K562 (cell line): ENCODE measurements at regions of chr12 and their contacts with region 1.

Region 1: DNA sequence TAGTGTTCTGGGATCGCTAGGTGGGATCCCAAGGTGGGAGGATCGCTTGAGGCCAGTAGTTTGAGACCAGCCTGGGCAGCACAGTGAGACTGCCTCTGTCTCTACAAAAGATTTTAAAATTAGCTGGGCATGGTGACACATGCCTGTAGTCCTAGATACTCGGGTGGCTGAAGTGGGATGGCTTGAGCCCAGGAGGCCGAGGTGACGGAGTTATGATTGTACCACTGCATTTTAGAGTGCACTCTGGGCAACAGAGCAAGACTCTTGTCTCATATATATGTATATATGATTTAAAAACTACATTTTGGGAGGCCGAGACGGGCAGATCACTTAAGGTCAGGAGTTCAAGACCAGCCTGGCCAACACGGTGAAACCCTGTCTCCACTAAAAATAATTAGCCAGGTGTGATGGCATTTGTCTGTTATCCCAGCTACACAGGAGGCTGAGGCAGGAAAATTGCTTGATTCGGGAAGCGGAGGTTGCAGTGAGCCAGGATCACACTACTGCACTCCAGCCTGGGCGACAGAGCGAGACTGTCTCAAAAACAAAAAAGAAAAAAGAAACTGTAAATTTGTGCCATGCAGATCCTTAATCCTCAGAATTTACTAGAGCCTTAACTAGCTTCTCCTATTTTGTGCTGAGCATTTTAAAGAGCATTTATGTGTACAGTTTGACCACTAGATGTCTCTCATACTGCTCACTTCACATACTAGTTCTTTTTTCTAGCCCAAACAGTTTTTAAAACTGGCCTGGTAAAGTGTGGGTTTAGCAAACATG is 114.8 kb downstream of the MON2 start:
- DNase-seq: peak; percentile 15 to 51 (median 27)
- ATAC-seq: peak; percentile 95
- H3K4me3 ChIP-seq: no peak overlapping the region
- H3K27ac ChIP-seq: no peak overlapping the region
- H3K4me1 ChIP-seq: no peaks in the 10 kb centered on the region
- H3K27me3 ChIP-seq: no peaks in the 10 kb centered on the region
- CTCF ChIP-seq: peak; percentile 49 to 72 (median 51); a peak in 5 of 6 replicates
- EP300 ChIP-seq: no peak
- POLR2A ChIP-seq: no peak
- RAD21 ChIP-seq: peak; percentile 81 to 84

Region 2: DNA sequence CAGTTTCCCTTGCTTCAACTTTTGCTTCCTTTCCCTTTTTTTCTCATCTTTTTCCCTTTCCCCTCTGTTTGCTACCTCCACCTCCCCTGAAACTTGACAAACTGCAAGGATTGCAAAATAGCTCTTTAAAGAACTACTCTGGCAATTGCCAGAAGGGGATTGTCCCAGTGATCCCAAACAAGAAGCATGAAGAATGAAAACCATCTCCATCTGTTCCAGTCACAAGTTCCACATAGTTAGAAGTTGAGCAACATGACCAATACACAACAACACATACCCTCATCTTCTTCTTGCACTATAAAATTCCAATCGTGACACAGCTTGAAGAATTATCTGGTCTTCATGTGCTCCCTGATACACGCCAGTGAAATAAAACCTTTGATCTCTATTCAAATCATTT is 415.0 kb before region 1 on chr12:
- CTCF ChIA-PET with region 1: no interaction called
- POLR2A ChIA-PET with region 1: no interaction called
- in situ Hi-C with region 1: no loop called
- intact Hi-C with region 1: no loop called
- DNase-seq: no peak
- ATAC-seq: no peak
- H3K4me3 ChIP-seq: no peak overlapping the region
- H3K27ac ChIP-seq: no peak overlapping the region
- H3K4me1 ChIP-seq: no peaks in the 10 kb centered on the region
- H3K27me3 ChIP-seq: no peaks in the 10 kb centered on the region
- CTCF ChIP-seq: no peak
- EP300 ChIP-seq: no peak
- POLR2A ChIP-seq: no peak
- RAD21 ChIP-seq: no peak

Region 3: GRCh38 chr12:62351326-62351725 is 230.2 kb before region 1 on chr12:
- CTCF ChIA-PET with region 1: no interaction called
- POLR2A ChIA-PET with region 1: no interaction called
- in situ Hi-C with region 1: no loop called
- intact Hi-C with region 1: no loop called
- DNase-seq: no peak
- ATAC-seq: peak; percentile 13; the same call in 1 of the 3 replicates
- H3K4me3 ChIP-seq: no peak overlapping the region
- H3K27ac ChIP-seq: peak overlapping the region; percentile 12; the same call in 1 of the 3 replicates
- H3K4me1 ChIP-seq: no peaks in the 10 kb centered on the region
- H3K27me3 ChIP-seq: no peaks in the 10 kb centered on the region
- CTCF ChIP-seq: no peak
- EP300 ChIP-seq: no peak
- POLR2A ChIP-seq: no peak
- RAD21 ChIP-seq: no peak

Region 4: GRCh38 chr12:62530596-62530995 is 50.9 kb before region 1 on chr12:
- CTCF ChIA-PET with region 1: no interaction called
- POLR2A ChIA-PET with region 1: no interaction called
- in situ Hi-C with region 1: no loop called
- intact Hi-C with region 1: no loop called
- DNase-seq: no peak
- ATAC-seq: no peak
- H3K4me3 ChIP-seq: no peak overlapping the region
- H3K27ac ChIP-seq: no peak overlapping the region
- H3K4me1 ChIP-seq: no peaks in the 10 kb centered on the region
- H3K27me3 ChIP-seq: no peaks in the 10 kb centered on the region
- CTCF ChIP-seq: no peak
- EP300 ChIP-seq: no peak
- POLR2A ChIP-seq: no peak
- RAD21 ChIP-seq: no peak

Region 5: DNA sequence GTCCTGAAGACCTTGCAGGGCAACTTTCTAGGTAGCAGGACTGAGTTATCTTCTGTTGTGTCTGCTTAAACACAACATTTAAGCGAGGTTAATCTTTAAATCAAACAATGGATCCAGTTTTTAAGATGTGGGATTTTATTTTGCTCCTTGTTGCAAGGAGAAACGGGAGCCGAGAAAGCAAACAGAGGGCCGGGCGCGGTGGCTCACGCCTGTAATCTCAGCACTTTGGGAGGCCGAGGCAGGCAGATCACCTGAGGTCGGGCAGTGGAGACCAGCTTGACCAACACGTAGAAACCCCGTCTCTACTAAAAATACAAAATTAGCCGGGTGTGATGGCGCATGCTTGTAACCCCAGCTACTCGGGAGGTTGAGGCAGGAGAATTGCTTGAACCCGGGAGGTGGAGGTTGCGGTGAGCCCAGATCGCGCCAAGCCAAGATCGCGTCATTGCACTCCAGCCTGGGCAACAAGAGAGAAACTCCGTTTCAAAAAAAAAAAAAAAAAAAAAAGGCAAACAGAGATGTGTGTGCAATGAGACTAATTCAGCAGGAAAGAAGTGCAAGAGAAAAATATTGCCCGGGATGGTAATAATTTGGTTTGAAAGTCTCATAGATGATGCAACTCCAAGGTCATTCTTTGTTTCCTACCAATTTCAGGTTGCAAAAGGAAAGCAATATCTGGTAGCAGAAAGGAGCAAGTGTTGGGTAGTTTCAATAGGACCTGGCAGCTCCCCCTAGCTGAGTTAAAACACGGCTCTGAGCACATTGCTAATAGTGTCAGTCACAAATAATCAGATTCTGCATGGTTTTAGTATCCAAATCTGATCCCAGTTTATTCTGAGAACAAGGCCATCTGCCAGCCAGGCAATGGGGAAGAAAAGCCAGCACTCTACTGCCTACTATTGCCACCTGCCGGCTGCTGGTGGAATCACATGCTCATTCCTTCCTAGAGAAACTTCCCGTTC is 212.1 kb after region 1 on chr12:
- CTCF ChIA-PET with region 1: interaction called, 33 read pairs
- POLR2A ChIA-PET with region 1: no interaction called
- in situ Hi-C with region 1: no loop called
- intact Hi-C with region 1: loop called (anchors 1 kb)
- DNase-seq: peak; percentile 67 to 78 (median 70)
- ATAC-seq: peak; percentile 87
- H3K4me3 ChIP-seq: no peak overlapping the region
- H3K27ac ChIP-seq: no peak overlapping the region
- H3K4me1 ChIP-seq: no peaks in the 10 kb centered on the region
- H3K27me3 ChIP-seq: no peaks in the 10 kb centered on the region
- CTCF ChIP-seq: peak; percentile 80 to 92 (median 86)
- EP300 ChIP-seq: no peak
- POLR2A ChIP-seq: no peak
- RAD21 ChIP-seq: peak; percentile 93 to 95

Region 6: GRCh38 chr12:62799126-62799736 is 217.8 kb after region 1 on chr12:
- CTCF ChIA-PET with region 1: interaction called, 33 read pairs
- POLR2A ChIA-PET with region 1: no interaction called
- in situ Hi-C with region 1: loop called (anchors 5 kb)
- intact Hi-C with region 1: loop called (anchors 1 kb)
- DNase-seq: peak; percentile 69 to 84 (median 78)
- ATAC-seq: peak; percentile 95
- H3K4me3 ChIP-seq: no peak overlapping the region
- H3K27ac ChIP-seq: no peak overlapping the region
- H3K4me1 ChIP-seq: peaks cover 0 to 7% of the 10 kb centered on the region in 2 experiments; a peak in 1 of 5 replicates
- H3K27me3 ChIP-seq: no peaks in the 10 kb centered on the region
- CTCF ChIP-seq: peak; percentile 79 to 86 (median 84)
- EP300 ChIP-seq: no peak
- POLR2A ChIP-seq: no peak
- RAD21 ChIP-seq: peak; percentile 79 to 82